ENCODE measurements at regions of chr5 and their contacts with region 1.

Region 1: GRCh38 chr5:38193015-38193581 is 65.3 kb upstream of the EGFLAM start:
- DNase-seq: peak; percentile 73
- H3K4me3 Mint-ChIP-seq: no peak overlapping the region
- H3K27ac Mint-ChIP-seq: no peak overlapping the region
- H3K4me1 Mint-ChIP-seq: no peaks in the 10 kb centered on the region
- H3K27me3 Mint-ChIP-seq: peaks cover 58% of the 10 kb centered on the region

Region 2: GRCh38 chr5:37412515-37413277 is 780.4 kb before region 1 on chr5:
- CTCF ChIA-PET with region 1: interaction called, 22 read pairs
- DNase-seq: peak; percentile 45
- H3K4me3 Mint-ChIP-seq: no peak overlapping the region
- H3K27ac Mint-ChIP-seq: no peak overlapping the region
- H3K4me1 Mint-ChIP-seq: no peaks in the 10 kb centered on the region
- H3K27me3 Mint-ChIP-seq: no peaks in the 10 kb centered on the region

Region 3: DNA sequence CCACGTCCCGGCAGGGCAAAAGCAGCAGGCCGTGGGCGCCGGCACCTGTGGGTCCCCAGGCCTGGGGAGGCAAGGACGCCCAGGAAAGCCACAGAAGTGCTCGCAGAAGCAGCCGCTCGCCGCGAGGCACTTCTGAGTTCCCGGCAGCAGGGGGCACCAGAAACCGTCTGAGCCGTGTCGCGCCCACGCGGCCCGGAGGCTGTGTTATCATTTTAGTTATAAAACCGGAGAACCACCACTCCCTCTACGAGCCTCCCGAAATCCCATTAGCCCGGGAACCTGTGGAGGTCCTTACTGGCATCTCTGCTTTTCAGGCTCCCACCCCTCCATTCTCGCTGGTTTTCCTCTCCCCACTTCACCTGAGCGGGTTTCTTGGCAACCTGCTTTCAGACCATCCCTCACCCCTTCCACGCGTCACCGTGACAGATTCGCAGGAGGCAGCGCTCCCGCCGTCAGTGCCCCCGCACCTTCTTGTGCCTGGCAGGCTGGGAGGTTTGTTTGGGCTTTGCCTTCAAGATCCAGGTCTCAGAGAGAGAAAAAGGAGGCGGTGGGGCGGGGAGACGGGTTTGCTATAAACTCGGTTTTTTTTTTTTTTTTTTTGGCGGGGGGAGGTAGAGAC is 355.6 kb before region 1 on chr5:
- CTCF ChIA-PET with region 1: interaction called, 15 read pairs
- DNase-seq: peak; percentile 71
- H3K4me3 Mint-ChIP-seq: peak overlapping the region; percentile 27
- H3K27ac Mint-ChIP-seq: no peak overlapping the region
- H3K4me1 Mint-ChIP-seq: peaks cover 29% of the 10 kb centered on the region
- H3K27me3 Mint-ChIP-seq: peaks cover 99% of the 10 kb centered on the region

Region 4: DNA sequence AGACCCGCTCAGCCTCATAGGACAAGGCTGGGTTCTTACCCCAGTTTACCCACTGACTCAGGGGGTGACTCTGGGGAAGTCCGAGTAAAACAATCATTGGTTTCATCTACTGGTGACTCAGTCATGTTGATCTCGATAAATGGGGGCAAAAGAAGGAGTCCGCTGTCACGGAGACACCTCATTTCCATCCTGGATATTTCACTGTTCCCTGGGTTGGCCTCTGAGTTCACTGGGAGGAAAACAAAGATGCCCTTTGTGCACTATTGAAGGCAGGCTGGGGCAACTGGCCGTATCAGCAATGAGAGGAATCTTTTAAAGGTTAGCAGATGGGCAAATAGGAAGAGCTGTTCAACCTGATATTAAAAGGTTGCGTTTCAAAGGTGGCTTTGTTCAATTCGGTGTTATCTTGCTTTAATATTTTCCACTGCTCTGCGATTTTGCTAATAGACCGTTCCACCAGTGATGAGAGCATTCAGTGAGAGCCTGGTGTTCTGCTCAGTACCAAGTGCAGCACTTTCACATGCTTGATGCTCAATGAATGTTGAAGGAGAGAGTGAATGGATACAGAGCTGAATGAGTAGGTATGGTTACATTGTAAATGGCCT is 45.0 kb before region 1 on chr5:
- CTCF ChIA-PET with region 1: no interaction called
- DNase-seq: no peak
- H3K4me3 Mint-ChIP-seq: no peak overlapping the region
- H3K27ac Mint-ChIP-seq: no peak overlapping the region
- H3K4me1 Mint-ChIP-seq: no peaks in the 10 kb centered on the region
- H3K27me3 Mint-ChIP-seq: no peaks in the 10 kb centered on the region

Region 5: GRCh38 chr5:38273624-38274023 is 80.5 kb after region 1 on chr5:
- CTCF ChIA-PET with region 1: no interaction called
- DNase-seq: no peak
- H3K4me3 Mint-ChIP-seq: no peak overlapping the region
- H3K27ac Mint-ChIP-seq: no peak overlapping the region
- H3K4me1 Mint-ChIP-seq: no peaks in the 10 kb centered on the region
- H3K27me3 Mint-ChIP-seq: no peaks in the 10 kb centered on the region